CD8-positive, alpha-beta T cell (primary cell): ENCODE measurements at regions of chr1 and their contacts with region 1.

Region 1: DNA sequence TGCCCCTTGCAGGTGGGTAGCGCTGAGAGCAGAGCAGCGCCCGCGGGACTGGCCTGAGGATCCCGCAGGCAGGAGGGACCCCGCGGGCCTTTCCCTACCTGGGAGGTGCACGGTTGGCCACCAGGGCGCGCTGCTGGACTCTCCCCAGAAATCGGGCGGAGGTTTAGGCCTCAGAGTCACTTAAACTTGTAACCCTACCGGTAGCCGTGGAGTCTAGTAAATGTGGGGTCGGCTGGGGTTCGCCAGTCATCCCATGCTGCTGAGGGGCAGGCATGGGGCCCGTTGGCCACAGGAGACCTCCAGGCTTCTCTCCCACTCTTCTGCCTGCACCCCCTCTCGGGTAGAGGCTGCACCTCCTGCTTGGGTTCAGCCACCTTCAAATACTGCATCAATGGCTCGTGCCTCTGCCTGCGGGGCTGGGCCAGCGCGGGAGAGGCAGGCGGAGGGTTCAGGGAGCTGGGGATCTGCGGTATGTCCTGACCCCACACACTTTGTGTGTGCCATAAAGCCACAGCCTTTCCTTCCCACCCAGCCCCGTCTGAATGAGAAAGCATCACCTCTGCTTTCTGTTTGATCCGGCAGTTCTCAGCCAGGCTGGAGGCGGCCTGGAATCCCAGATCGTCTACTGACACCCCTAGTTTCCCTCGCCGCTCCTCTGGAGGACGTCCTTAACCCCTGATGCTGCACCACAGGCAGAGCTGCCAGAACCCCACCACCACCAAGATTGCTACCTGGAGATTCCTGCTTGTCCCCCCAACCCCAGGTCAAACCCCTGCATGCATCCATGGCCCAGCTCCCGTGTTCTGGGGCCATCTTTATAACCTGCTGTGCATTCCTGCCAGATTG is 12.3 kb upstream of the GSTM4 start:
- DNase-seq: peak; percentile 73 to 94 (median 86)
- ATAC-seq: peak; percentile 94
- H3K4me3 ChIP-seq: no peak overlapping the region
- H3K4me3 Mint-ChIP-seq: no peak overlapping the region
- H3K27ac ChIP-seq: no peak overlapping the region
- H3K27ac Mint-ChIP-seq: peak overlapping the region; percentile 45
- H3K4me1 ChIP-seq: peaks cover 13% of the 10 kb centered on the region
- H3K4me1 Mint-ChIP-seq: peaks cover 6% of the 10 kb centered on the region
- H3K27me3 ChIP-seq: no peaks in the 10 kb centered on the region
- H3K27me3 Mint-ChIP-seq: peaks cover 4% of the 10 kb centered on the region
- CTCF ChIP-seq: peak; percentile 81

Region 2: DNA sequence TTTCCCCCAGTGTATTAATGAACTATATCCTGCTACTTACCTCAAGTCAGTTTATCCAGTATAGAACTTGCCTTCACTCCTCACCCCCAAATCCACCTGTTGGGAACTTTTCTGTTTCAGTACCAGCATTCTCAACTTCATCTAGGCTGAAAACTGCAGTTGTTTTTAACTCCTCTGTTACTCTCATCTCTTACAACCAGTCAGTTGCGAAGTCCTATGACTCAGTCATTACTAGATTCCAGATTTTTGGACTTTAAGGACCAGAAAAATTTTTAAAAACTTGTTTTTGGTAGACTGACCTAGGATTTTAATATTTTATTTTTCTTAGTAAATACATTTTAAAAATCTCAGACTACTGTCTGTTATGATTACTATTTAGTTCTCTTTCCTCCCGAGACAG is 87.0 kb before region 1 on chr1:
- CTCF ChIA-PET with region 1: interaction called, 14 read pairs
- POLR2A ChIA-PET with region 1: no interaction called
- intact Hi-C with region 1: no loop called
- DNase-seq: no peak
- ATAC-seq: no peak
- H3K4me3 ChIP-seq: no peak overlapping the region
- H3K4me3 Mint-ChIP-seq: no peak overlapping the region
- H3K27ac ChIP-seq: no peak overlapping the region
- H3K27ac Mint-ChIP-seq: no peak overlapping the region
- H3K4me1 ChIP-seq: peaks cover 28% of the 10 kb centered on the region
- H3K4me1 Mint-ChIP-seq: peaks cover 79% of the 10 kb centered on the region
- H3K27me3 ChIP-seq: no peaks in the 10 kb centered on the region
- H3K27me3 Mint-ChIP-seq: no peaks in the 10 kb centered on the region
- CTCF ChIP-seq: no peak

Region 3: DNA sequence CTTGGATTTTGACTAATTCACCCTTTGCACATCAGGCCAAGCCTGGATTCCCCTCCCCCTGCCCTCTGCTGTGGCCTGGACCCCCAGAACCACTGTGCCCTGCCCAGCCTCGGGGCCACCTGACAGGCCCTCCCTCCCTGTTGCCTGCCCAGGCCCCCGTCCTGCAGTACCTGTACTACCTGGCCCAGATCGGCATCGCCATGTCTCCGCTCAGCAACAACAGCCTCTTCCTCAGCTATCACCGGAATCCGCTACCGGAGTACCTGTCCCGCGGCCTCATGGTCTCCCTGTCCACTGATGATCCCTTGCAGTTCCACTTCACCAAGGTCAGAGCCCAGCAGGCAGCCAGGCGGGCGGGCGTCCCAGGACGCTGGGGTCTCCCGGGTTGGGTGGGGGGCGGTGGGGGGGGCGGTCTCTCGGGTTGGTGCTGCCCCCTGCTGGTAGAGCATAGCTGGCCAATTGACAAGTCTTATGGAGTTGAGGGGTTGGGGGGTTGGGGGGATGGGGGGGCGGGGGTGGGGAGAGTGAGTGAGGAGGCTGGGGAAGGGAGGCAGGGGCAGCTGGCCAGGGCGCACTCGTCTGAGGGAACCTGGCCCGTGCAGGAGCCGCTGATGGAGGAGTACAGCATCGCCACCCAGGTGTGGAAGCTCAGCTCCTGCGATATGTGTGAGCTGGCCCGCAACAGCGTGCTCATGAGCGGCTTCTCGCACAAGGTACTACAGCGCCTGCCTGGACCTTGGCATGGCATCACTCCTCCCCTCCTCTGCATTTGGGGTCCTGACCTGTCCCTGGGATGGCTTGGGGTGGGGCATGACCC is 13.3 kb before region 1 on chr1:
- CTCF ChIA-PET with region 1: interaction called, 177 read pairs
- POLR2A ChIA-PET with region 1: no interaction called
- intact Hi-C with region 1: no loop called
- DNase-seq: peak in 7 of 9 experiments; percentile 45 to 69 (median 55)
- ATAC-seq: peak; percentile 61
- H3K4me3 ChIP-seq: no peak overlapping the region
- H3K4me3 Mint-ChIP-seq: no peak overlapping the region
- H3K27ac ChIP-seq: no peak overlapping the region
- H3K27ac Mint-ChIP-seq: no peak overlapping the region
- H3K4me1 ChIP-seq: peaks cover 12% of the 10 kb centered on the region
- H3K4me1 Mint-ChIP-seq: peaks cover 12% of the 10 kb centered on the region
- H3K27me3 ChIP-seq: no peaks in the 10 kb centered on the region
- H3K27me3 Mint-ChIP-seq: no peaks in the 10 kb centered on the region
- CTCF ChIP-seq: peak; percentile 28

Region 4: DNA sequence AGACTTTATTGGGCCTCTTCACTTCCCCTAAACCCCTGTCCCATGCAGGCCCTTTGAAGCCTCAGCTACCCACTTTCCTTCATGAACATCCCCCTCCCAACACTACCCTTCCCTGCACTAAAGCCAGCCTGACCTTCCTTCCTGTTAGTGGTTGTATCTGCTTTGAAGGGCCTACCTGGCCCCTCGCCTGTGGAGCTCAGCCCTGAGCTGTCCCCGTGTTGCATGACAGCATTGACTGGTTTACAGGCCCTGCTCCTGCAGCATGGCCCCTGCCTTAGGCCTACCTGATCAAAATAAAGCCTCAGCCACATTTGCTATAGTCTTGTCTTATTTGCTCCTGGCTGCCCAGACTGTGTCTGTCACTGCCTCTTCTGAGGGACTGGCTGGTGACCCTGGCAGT is 17.8 kb after region 1 on chr1:
- CTCF ChIA-PET with region 1: interaction called, 177 read pairs
- POLR2A ChIA-PET with region 1: no interaction called
- intact Hi-C with region 1: loop called in 1 of 2 experiments (anchors 1 kb)
- DNase-seq: no peak
- ATAC-seq: no peak
- H3K4me3 ChIP-seq: no peak overlapping the region
- H3K4me3 Mint-ChIP-seq: no peak overlapping the region
- H3K27ac ChIP-seq: no peak overlapping the region
- H3K27ac Mint-ChIP-seq: no peak overlapping the region
- H3K4me1 ChIP-seq: no peaks in the 10 kb centered on the region
- H3K4me1 Mint-ChIP-seq: peaks cover 6% of the 10 kb centered on the region
- H3K27me3 ChIP-seq: no peaks in the 10 kb centered on the region
- H3K27me3 Mint-ChIP-seq: no peaks in the 10 kb centered on the region
- CTCF ChIP-seq: no peak

Region 5: DNA sequence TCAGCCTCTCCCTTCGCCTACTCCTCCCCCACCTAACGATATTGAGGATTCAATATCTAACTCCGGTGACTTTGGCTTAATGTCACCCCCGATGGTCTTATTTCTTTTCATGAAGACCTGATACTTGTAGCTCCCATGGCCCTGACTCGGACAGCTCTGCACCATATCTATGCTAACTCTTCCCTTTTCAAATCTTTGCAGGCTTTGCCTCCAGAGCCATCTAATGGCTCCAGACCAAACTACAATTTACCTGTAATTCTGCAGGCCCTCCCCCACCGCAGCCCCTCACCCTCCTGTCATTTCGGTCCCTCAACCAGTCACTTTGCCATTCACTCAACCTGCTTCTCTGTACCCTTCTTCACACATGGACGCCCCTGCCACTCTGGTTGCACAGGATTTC is 60.6 kb after region 1 on chr1:
- CTCF ChIA-PET with region 1: no interaction called
- POLR2A ChIA-PET with region 1: no interaction called
- intact Hi-C with region 1: no loop called
- DNase-seq: no peak
- ATAC-seq: no peak
- H3K4me3 ChIP-seq: no peak overlapping the region
- H3K4me3 Mint-ChIP-seq: no peak overlapping the region
- H3K27ac ChIP-seq: no peak overlapping the region
- H3K27ac Mint-ChIP-seq: no peak overlapping the region
- H3K4me1 ChIP-seq: no peaks in the 10 kb centered on the region
- H3K4me1 Mint-ChIP-seq: no peaks in the 10 kb centered on the region
- H3K27me3 ChIP-seq: no peaks in the 10 kb centered on the region
- H3K27me3 Mint-ChIP-seq: no peaks in the 10 kb centered on the region
- CTCF ChIP-seq: no peak

Region 6: DNA sequence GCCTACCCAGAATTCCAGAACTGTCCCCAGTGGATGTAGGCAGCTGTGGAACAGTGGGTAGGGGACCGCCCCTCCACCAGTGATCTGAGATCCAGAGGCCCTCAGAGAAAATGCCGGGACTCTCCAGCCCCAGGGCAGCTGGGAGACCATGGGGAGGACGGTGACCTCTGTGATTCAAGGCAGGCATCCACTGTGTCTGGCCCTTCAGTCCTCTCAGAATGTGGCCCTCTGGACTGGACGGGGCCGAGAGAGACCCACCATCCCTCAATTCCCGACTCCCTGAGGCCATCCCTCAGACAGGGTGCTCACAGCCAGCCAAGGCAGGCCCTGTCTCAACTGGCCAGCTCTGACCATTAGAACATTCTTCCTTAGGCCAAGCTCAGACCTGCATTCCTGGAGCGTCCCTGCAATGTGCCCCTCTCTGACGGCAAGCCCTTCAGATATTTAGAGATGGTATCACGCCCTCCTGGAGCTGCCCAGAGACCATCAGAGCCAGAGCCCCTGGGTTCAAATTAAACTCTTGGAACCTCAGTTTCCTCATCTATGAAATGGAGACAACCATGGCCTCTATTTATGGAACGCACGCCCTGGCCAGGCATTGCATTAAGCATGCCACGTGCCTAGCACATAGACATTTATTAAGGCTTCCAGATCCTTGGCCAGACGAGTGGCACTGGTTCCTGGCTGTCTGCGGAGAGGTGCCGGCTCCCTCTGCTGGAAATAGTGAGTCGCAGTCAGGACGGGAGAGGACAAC is 129.7 kb after region 1 on chr1:
- CTCF ChIA-PET with region 1: interaction called, 316 read pairs
- POLR2A ChIA-PET with region 1: interaction called, 4 read pairs
- intact Hi-C with region 1: loop called (anchors 1 kb)
- DNase-seq: peak; percentile 29 to 83 (median 67)
- ATAC-seq: peak; percentile 90
- H3K4me3 ChIP-seq: no peak overlapping the region
- H3K4me3 Mint-ChIP-seq: no peak overlapping the region
- H3K27ac ChIP-seq: no peak overlapping the region
- H3K27ac Mint-ChIP-seq: no peak overlapping the region
- H3K4me1 ChIP-seq: peaks cover 3% of the 10 kb centered on the region
- H3K4me1 Mint-ChIP-seq: peaks cover 8% of the 10 kb centered on the region
- H3K27me3 ChIP-seq: peaks cover 0 to 2% of the 10 kb centered on the region in 2 experiments
- H3K27me3 Mint-ChIP-seq: peaks cover 3% of the 10 kb centered on the region
- CTCF ChIP-seq: peak; percentile 65